Ascending aorta (tissue), 2 donors: ENCODE measurements at regions of chr9 and their contacts with region 1.

Region 1: DNA sequence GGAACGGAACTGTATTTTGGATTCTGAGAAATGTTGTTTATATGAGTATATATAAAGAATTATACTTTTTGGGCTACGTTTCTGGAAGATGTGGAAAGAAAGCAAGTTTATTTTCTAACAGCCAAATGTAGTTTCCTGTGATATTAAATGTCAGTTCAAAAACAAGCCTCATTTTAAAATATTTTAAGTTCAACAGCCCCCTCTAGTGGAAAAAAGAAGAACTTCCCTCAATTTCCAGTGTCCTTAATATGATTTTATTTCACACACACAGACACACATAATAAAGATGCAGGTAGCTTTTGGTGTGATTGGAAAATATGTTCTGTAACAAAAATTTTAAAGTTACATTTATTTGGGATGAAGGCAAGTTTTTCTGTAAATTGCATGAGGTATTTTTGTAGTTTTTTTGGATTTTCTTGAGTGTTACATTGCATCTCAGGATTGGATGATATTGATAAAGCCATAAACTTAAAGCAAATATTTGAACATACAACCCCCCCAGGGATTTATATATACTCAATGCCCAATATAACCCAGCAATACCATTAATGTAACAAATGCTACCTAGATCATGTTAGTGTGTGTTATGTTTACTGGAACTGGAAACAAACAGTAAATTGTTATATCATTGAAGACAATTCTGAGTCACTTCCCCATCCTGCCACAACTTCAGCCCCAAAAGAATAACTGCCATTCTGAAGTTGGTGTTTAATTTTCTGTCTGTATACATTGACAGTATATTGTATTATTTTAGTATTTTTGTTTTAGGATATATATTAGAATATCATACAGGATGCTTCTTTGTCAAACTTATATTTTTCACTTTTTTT is 54.0 kb downstream of the CCDC171 start:
- DNase-seq: no peak
- H3K4me3 ChIP-seq: no peak overlapping the region
- H3K27ac ChIP-seq: no peak overlapping the region
- H3K4me1 ChIP-seq: no peaks in the 10 kb centered on the region
- H3K27me3 ChIP-seq: no peaks in the 10 kb centered on the region
- CTCF ChIP-seq: peak; percentile 40 to 69 (median 67)

Region 2: GRCh38 chr9:15104826-15105420 is 501.9 kb before region 1 on chr9:
- intact Hi-C with region 1: loop called (anchors 10 kb)
- DNase-seq: no peak
- H3K4me3 ChIP-seq: no peak overlapping the region
- H3K27ac ChIP-seq: no peak overlapping the region
- H3K4me1 ChIP-seq: no peaks in the 10 kb centered on the region
- H3K27me3 ChIP-seq: no peaks in the 10 kb centered on the region
- CTCF ChIP-seq: peak; percentile 63 to 77 (median 72)

Region 3: GRCh38 chr9:15357050-15357653 is 249.7 kb before region 1 on chr9:
- intact Hi-C with region 1: loop called (anchors 10 kb)
- DNase-seq: no peak
- H3K4me3 ChIP-seq: no peak overlapping the region
- H3K27ac ChIP-seq: no peak overlapping the region
- H3K4me1 ChIP-seq: no peaks in the 10 kb centered on the region
- H3K27me3 ChIP-seq: no peaks in the 10 kb centered on the region
- CTCF ChIP-seq: no peak

Region 4: GRCh38 chr9:15377625-15378540 is 229.0 kb before region 1 on chr9:
- intact Hi-C with region 1: no loop called
- DNase-seq: no peak
- H3K4me3 ChIP-seq: no peak overlapping the region
- H3K27ac ChIP-seq: peak overlapping the region; percentile 42 to 62
- H3K4me1 ChIP-seq: peaks cover 0 to 5% of the 10 kb centered on the region in 2 donors
- H3K27me3 ChIP-seq: no peaks in the 10 kb centered on the region
- CTCF ChIP-seq: no peak

Region 5: DNA sequence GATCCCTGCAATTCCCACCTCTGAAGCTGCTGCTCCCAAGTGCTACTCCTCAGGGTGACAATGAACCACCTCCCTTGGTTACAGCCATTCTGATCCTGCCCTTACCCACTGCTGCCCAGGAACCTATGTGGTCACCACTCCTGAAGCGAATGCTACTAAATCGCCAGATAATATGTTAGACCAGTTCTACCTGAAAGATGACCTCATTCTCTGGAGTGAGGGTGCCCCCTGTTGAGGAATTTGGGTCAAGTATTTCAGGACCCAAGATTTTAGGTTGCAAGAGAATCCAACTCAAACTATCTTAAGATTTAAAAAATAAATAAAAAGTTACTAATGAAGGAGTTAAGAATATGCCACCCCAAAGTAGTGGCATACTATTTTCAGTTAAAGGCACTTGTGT is 190.0 kb before region 1 on chr9:
- intact Hi-C with region 1: loop called (anchors 5 kb)
- DNase-seq: no peak
- H3K4me3 ChIP-seq: no peak overlapping the region
- H3K27ac ChIP-seq: no peak overlapping the region
- H3K4me1 ChIP-seq: peaks cover 0 to 2% of the 10 kb centered on the region in 2 donors
- H3K27me3 ChIP-seq: no peaks in the 10 kb centered on the region
- CTCF ChIP-seq: peak; percentile 30 to 51 (median 44)

Region 6: DNA sequence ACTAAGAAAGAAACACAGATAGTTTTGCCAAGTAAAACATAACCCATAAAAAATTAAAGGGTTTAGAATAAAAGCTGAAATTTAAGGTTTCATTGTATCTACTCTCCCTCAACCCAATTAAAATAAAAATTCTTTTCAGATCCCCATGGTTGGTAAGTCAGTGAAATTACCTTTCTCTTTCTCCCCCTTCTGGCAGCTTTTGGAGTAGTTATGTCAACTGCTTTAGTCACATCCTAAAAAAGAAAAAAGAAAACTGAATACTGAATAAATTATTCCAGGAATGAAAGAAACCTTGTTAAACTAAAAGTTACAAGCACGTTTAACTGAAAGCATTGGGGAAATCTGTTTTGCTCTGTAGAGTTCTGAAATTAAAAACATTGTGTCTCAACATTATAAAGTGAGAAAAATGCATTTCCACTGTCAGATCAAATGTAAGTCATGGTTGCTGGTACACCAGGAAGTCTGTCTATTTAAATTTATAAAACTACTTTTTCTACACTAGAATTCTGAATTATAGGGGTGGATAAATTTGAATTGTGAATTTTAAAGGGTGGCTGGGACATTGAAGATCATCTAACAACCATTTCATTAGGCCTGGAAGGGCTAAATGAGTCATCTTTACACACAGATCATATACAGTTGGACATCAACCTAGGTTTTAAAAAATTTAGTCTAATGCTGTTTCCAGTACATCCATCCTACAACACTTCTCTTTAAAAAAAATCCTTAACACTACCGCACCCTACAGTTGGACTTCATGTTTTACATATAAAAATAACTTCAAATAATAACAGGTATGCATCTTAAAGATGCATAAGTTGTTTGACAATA is 120.8 kb before region 1 on chr9:
- intact Hi-C with region 1: loop called (anchors 10 kb)
- DNase-seq: no peak
- H3K4me3 ChIP-seq: no peak overlapping the region
- H3K27ac ChIP-seq: peak overlapping the region; percentile 23 to 41
- H3K4me1 ChIP-seq: peaks cover 0 to 7% of the 10 kb centered on the region in 2 donors
- H3K27me3 ChIP-seq: no peaks in the 10 kb centered on the region
- CTCF ChIP-seq: peak; percentile 21 to 71 (median 32)

Region 7: DNA sequence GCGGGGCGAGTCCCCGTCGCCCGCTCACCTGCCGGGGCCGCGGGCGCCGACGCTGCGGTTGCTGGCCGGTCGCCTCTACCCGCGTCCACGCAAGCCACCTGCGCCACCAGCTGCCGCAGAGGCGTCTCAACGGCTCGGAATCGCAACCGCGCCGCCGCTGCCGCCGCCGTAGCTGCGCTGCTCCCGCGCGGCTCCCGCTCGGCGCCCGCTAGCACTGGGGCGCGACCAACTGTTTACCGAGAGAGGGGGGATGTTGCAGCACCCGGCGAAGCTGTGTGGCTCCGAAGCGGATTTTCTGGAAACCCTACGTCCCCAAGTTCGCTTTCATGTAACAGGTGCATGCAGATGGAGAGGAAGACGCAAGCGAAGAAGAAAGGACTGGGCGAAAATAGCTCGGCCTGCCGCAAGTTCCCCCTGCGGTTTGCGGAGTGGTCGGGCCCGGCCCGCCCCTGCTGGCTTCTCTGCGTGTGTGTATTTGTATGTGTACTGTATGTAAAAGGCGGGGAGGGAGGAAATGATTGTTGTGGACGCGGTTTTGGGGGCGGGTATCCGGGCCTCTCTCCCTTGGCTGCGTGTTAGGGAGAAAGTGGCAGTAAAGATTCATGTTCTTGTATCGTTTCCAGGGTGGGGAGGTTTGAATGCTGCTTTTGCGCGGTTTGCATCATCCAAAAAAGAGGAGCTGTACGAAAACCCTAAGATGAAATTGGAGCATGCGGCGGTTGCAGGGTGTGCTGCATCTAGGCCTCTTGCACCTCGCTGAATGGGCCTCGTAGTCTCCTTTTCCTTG is 95.9 kb before region 1 on chr9 and contains the start of gene PSIP1:
- intact Hi-C with region 1: loop called (anchors 10 kb)
- DNase-seq: peak in 1 of 2 donors; percentile 80
- H3K4me3 ChIP-seq: peak within 1 kb of the TSS; percentile 72 to 94
- H3K27ac ChIP-seq: peak within 1 kb of the TSS; percentile 92 to 95
- H3K4me1 ChIP-seq: peaks cover 0 to 4% of the 10 kb centered on the region in 2 donors
- H3K27me3 ChIP-seq: no peaks in the 10 kb centered on the region
- CTCF ChIP-seq: peak in 2 of 3 experiments; percentile 7 to 36
- total RNA-seq, gene PSIP1: 115 TPM

Region 8: DNA sequence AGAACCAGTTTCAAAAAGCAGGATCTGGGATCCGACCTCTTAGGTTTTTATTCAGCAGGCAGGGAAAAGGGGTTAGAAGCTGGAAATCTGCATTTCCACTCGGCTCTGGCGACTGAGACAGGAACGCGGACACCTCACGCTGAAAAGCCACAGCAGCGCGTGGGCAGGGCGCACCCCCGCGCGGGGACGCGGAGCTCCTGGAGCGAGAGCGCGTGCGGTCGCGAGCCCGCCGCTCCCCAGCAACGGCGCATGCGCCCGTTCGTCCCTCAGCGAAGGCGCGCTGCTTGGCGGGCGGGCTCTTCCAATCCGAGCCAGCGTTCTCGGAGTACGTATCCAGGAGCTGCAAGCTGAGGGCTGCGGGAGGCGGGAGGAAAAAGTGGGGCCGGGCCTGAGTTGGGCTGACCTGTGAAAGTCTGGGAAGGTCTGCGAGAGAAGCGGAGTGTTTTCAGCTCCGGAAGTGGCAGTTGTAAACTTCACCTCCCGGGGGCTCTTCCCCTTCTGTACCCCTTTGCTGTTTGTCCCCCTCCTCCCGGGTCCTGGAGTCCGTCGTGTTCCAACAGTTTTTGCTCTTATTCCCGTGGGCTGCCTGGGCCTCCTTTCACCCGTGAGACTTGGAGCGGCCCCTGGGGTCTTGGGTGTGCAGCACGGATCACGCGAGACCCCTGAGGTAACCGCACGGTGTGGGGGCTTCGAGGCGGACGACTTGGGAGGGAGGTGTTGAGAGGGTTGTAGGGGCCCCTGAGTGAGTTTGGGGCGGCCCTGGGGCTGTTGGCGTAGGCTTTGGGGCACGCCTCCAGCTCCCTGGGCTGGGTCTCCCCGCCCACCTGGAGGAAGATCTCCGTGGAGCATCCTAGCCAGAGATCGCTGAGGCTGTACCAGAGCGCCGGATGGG is 54.0 kb before region 1 on chr9 and contains the start of gene CCDC171:
- intact Hi-C with region 1: loop called (anchors 5 kb)
- DNase-seq: peak; percentile 72 to 95
- H3K4me3 ChIP-seq: peak within 1 kb of the TSS; percentile 74 to 75
- H3K27ac ChIP-seq: peak within 1 kb of the TSS; percentile 78 to 84
- H3K4me1 ChIP-seq: peaks cover 0 to 5% of the 10 kb centered on the region in 2 donors
- H3K27me3 ChIP-seq: no peaks in the 10 kb centered on the region
- CTCF ChIP-seq: peak in 1 of 3 experiments; percentile 7
- total RNA-seq, gene CCDC171: 1.7 TPM